GM18951 (cell line): ENCODE measurements at regions of chr19 and their contacts with region 1.

Region 1: GRCh38 chr19:40662921-40663694 is 27.3 kb downstream of the NUMBL start:
- POLR2A ChIP-seq: peak; percentile 37

Region 2: GRCh38 chr19:41144403-41144802 is 481.3 kb after region 1 on chr19:
- in situ Hi-C with region 1: loop called (anchors 25 kb)
- POLR2A ChIP-seq: no peak